ENCODE measurements at regions of chr9 and their contacts with region 1.

Region 1: DNA sequence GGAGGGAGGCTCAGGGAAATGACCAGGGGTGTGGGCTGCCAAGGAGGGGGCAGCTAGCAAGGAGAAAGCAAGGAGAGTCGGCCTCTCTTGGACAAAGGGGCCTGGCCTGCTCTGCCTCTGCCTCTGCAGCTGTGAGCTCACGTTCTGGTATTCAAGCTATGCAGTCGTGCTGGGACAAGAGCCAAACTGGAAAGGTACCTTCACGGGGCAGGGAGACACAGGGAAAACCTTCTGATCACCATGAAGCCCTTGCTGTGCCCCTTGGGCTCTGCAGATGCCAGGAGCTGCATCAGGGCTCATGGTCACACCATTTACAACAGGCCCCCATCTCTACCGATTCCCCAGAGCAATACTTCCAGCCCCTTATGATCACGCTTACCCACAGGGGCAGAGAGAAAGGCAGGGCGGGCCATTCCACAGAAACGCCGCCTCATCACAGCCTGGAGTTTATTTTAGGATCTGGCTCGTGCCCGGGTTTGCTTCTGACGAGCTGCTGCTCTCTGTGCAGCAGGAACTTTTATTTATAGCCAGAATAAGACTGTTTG is 63.2 kb downstream of the PRRT1B start:
- DNase-seq: no peak
- H3K4me3 ChIP-seq: peak overlapping the region in 1 of 2 donors; percentile 14
- H3K27ac ChIP-seq: peak overlapping the region; percentile 87
- H3K4me1 ChIP-seq: peaks cover 40% of the 10 kb centered on the region
- H3K27me3 ChIP-seq: no peaks in the 10 kb centered on the region
- CTCF ChIP-seq: no peak
- POLR2A ChIP-seq: no peak

Region 2: DNA sequence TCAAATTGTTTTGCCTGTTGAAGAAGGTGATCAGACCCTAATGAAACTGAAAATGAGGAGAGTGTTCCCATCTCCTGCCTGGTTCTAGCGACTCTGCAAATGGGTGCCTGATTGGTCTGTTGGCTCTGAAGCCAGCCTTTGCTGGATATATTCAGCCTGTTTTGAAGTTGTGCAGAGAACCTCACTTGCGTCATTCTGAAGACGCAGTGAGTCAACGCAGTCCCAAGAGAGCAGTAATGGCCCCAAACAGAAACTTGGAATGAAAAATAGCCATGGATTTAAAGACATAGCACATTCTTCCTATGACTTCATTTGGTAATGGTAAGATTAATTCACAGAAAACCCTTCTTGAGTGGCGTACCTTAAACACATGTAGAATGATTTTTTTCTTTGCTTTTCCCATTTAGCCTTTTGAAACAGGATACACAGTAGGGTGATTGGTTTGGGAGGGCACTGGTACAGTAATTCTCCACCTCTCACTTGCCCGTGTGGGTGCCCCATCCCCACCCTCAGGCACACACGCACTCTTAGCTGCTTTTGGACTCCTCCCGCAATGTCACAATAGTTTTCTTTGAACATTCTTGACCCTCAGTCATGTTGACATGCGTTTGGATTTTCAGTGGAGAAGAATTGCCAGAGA is 827.6 kb before region 1 on chr9:
- intact Hi-C with region 1: no loop called
- DNase-seq: peak in 1 of 2 donors; percentile 95
- H3K4me3 ChIP-seq: peak overlapping the region; percentile 16 to 39
- H3K27ac ChIP-seq: peak overlapping the region; percentile 91
- H3K4me1 ChIP-seq: peaks cover 55% of the 10 kb centered on the region
- H3K27me3 ChIP-seq: no peaks in the 10 kb centered on the region
- CTCF ChIP-seq: no peak
- POLR2A ChIP-seq: peak; percentile 11 to 82

Region 3: DNA sequence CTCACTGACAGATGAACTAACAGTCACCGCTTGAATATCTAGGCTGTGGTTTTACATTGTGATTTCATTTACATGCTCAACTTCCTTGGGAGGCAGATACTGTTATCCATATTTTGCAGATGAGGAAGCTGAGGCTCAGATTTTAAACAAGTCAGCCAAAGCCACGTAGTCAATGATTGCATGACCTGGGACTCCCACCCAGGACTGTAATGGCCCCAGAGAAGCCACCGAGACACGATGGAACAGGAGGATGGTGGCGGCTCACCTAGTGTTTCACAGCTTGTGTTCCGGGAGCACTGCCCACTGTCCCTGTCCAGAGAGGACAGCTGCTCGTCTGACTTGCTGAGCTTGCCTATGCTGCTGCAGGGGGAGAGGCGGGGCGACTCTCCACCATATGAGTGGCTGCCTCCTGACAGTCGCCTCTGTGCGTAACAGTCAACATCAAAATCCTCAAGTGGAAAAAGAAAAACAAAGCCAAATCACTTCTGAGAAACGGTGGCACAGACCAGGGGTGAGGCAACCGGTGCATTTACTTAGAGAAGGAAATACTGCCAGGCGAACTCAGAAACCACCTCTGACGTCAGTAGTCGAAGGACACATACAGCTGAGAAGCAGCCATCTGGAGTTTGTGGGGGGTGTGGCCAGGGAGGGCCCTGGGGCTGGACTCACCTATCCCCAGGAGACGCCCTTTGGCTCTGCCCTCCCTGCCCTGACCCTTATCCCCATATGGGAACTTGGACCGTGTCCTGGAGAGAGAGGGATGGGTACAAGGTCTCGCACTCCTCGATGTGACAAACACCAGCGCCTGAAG is 19.3 kb after region 1 on chr9:
- intact Hi-C with region 1: no loop called
- DNase-seq: no peak
- H3K4me3 ChIP-seq: no peak overlapping the region
- H3K27ac ChIP-seq: peak overlapping the region; percentile 43
- H3K4me1 ChIP-seq: peaks cover 12% of the 10 kb centered on the region
- H3K27me3 ChIP-seq: no peaks in the 10 kb centered on the region
- CTCF ChIP-seq: no peak
- POLR2A ChIP-seq: no peak

Region 4: GRCh38 chr9:133375724-133376654 is 1767.4 kb after region 1 on chr9 and contains the starts of genes STKLD1 and SURF4:
- intact Hi-C with region 1: loop called (anchors 10 kb)
- DNase-seq: no peak
- H3K4me3 ChIP-seq: peak within 1 kb of the TSS; percentile 91 to 92
- H3K27ac ChIP-seq: peak within 1 kb of the TSS; percentile 86
- H3K4me1 ChIP-seq: peaks cover 54% of the 10 kb centered on the region
- H3K27me3 ChIP-seq: no peaks in the 10 kb centered on the region
- CTCF ChIP-seq: no peak
- POLR2A ChIP-seq: peak in 1 of 2 donors; percentile 83
- total RNA-seq, gene STKLD1: not detected
- total RNA-seq, gene SURF4: 112 TPM